ENCODE measurements at regions of chr14 and their contacts with region 1.

Region 1: GRCh38 chr14:22221508-22221907 is 367.5 kb downstream of the DAD1 start:
- DNase-seq: peak in 1 of 2 experiments; percentile 29
- H3K4me3 ChIP-seq: no peak overlapping the region
- H3K4me3 Mint-ChIP-seq: no peak overlapping the region
- H3K27ac Mint-ChIP-seq: no peak overlapping the region
- H3K4me1 ChIP-seq: peaks cover 9% of the 10 kb centered on the region
- H3K4me1 Mint-ChIP-seq: peaks cover 6% of the 10 kb centered on the region
- H3K27me3 ChIP-seq: no peaks in the 10 kb centered on the region
- H3K27me3 Mint-ChIP-seq: no peaks in the 10 kb centered on the region
- CTCF ChIP-seq: peak; percentile 15 to 43

Region 2: DNA sequence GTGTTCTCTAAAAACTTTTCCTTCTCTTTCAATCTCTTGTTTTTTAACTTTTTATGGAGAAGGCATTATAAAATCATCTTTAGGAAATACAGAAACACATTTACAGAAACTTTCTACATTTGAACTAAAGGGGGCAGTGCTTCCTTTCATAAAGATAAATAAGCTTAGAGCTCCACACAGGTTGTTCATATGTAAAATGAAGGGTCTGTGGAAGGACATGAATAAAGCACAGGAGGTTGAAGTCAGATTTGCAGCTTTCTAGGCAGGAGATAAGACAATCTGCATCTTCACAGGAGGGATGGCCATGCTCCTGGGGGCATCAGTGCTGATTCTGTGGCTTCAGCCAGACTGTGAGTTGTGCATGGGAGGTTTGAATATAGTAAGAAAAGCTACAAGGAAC is 58.5 kb before region 1 on chr14:
- CTCF ChIA-PET with region 1: interaction called, 14 read pairs
- POLR2A ChIA-PET with region 1: no interaction called
- intact Hi-C with region 1: loop called (anchors 10 kb)
- DNase-seq: no peak
- H3K4me3 ChIP-seq: no peak overlapping the region
- H3K4me3 Mint-ChIP-seq: no peak overlapping the region
- H3K27ac Mint-ChIP-seq: no peak overlapping the region
- H3K4me1 ChIP-seq: peaks cover 8% of the 10 kb centered on the region; the same call in 1 of the 2 replicates
- H3K4me1 Mint-ChIP-seq: no peaks in the 10 kb centered on the region
- H3K27me3 ChIP-seq: no peaks in the 10 kb centered on the region
- H3K27me3 Mint-ChIP-seq: no peaks in the 10 kb centered on the region
- CTCF ChIP-seq: peak; percentile 21 to 35

Region 3: DNA sequence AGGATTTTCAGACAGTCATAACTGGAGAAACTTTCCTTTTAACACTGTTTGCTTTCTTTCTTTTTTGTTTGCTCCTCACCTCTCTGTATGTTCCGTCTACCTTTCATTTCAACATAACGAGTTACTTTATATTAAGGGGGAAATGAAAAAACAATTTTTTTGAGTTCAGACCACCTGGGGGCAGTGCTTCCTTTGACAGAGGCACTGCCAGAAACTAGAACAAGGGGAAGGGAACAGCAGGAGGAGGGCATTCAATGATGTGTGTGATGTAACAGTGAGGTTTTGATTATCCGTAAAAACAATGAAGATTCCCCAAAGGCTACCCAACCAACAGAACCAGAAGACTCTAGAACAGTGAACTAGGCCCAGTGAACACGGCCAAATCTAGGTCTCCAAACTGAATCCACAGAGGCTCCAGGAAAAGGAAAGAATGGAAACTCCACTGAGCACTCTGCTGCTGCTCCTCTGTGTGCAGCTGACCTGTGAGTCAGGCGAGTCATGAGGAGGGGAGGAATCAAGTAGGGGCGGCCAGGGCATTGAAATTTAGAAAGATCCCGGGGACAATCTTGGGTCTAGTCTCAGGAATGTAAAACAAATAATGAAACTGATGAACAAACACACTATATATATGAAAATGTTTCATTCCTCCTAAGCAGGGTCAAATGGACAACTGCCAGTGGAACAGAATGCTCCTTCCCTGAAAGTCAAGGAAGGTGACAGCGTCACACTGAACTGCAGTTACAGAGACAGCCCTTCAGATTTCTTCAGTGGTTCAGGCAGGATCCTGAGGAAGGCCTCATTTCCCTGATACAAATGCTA is 44.0 kb after region 1 on chr14:
- CTCF ChIA-PET with region 1: interaction called, 15 read pairs
- POLR2A ChIA-PET with region 1: no interaction called
- intact Hi-C with region 1: loop called (anchors 1 kb)
- DNase-seq: peak; percentile 39 to 59
- H3K4me3 ChIP-seq: no peak overlapping the region
- H3K4me3 Mint-ChIP-seq: peak overlapping the region; percentile 41
- H3K27ac Mint-ChIP-seq: peak overlapping the region; percentile 68
- H3K4me1 ChIP-seq: peaks cover 45% of the 10 kb centered on the region
- H3K4me1 Mint-ChIP-seq: peaks cover 48% of the 10 kb centered on the region
- H3K27me3 ChIP-seq: no peaks in the 10 kb centered on the region
- H3K27me3 Mint-ChIP-seq: no peaks in the 10 kb centered on the region
- CTCF ChIP-seq: peak; percentile 38 to 49

Region 4: GRCh38 chr14:22319526-22320361 is 98.2 kb after region 1 on chr14:
- CTCF ChIA-PET with region 1: interaction called, 11 read pairs
- POLR2A ChIA-PET with region 1: no interaction called
- intact Hi-C with region 1: loop called (anchors 2 kb)
- DNase-seq: peak; percentile 67 to 72
- H3K4me3 ChIP-seq: no peak overlapping the region
- H3K4me3 Mint-ChIP-seq: no peak overlapping the region
- H3K27ac Mint-ChIP-seq: peak overlapping the region; percentile 34
- H3K4me1 ChIP-seq: peaks cover 14% of the 10 kb centered on the region; the same call in 1 of the 2 replicates
- H3K4me1 Mint-ChIP-seq: peaks cover 22% of the 10 kb centered on the region
- H3K27me3 ChIP-seq: no peaks in the 10 kb centered on the region
- H3K27me3 Mint-ChIP-seq: no peaks in the 10 kb centered on the region
- CTCF ChIP-seq: peak; percentile 61 to 69

Region 5: GRCh38 chr14:22386924-22387775 is 165.6 kb after region 1 on chr14:
- CTCF ChIA-PET with region 1: interaction called, 8 read pairs
- POLR2A ChIA-PET with region 1: no interaction called
- intact Hi-C with region 1: loop called (anchors 5 kb)
- DNase-seq: peak; percentile 67 to 77
- H3K4me3 ChIP-seq: no peak overlapping the region
- H3K4me3 Mint-ChIP-seq: no peak overlapping the region
- H3K27ac Mint-ChIP-seq: peak overlapping the region; percentile 38
- H3K4me1 ChIP-seq: peaks cover 66% of the 10 kb centered on the region
- H3K4me1 Mint-ChIP-seq: peaks cover 54% of the 10 kb centered on the region
- H3K27me3 ChIP-seq: no peaks in the 10 kb centered on the region
- H3K27me3 Mint-ChIP-seq: no peaks in the 10 kb centered on the region
- CTCF ChIP-seq: peak; percentile 64 to 69

Region 6: GRCh38 chr14:22735096-22735495 is 513.6 kb after region 1 on chr14:
- CTCF ChIA-PET with region 1: interaction called, 10 read pairs
- POLR2A ChIA-PET with region 1: no interaction called
- intact Hi-C with region 1: no loop called
- DNase-seq: no peak
- H3K4me3 ChIP-seq: no peak overlapping the region
- H3K4me3 Mint-ChIP-seq: no peak overlapping the region
- H3K27ac Mint-ChIP-seq: no peak overlapping the region
- H3K4me1 ChIP-seq: peaks cover 13% of the 10 kb centered on the region
- H3K4me1 Mint-ChIP-seq: peaks cover 12% of the 10 kb centered on the region
- H3K27me3 ChIP-seq: no peaks in the 10 kb centered on the region
- H3K27me3 Mint-ChIP-seq: no peaks in the 10 kb centered on the region
- CTCF ChIP-seq: no peak

Measured in Caco-2 (cell line).